ENCODE measurements at regions of chr2 and their contacts with region 1.

Region 1: GRCh38 chr2:65129826-65130663 is at the start of gene RAB1A:
- DNase-seq: peak; percentile 99
- H3K4me3 ChIP-seq: peak within 1 kb of the TSS; percentile 86 to 92 (median 91)
- H3K27ac ChIP-seq: peak within 1 kb of the TSS; percentile 99
- H3K4me1 ChIP-seq: no peaks in the 10 kb centered on the region
- H3K27me3 ChIP-seq: no peaks in the 10 kb centered on the region
- CTCF ChIP-seq: peak in 2 of 3 donors; percentile 10 to 11
- POLR2A ChIP-seq: peak; percentile 91
- total RNA-seq, gene RAB1A: 86.1 to 107 (median 89.5) TPM

Region 2: GRCh38 chr2:65056215-65057053 is 73.6 kb before region 1 on chr2 and contains the start of gene CEP68:
- intact Hi-C with region 1: loop called (anchors 2 kb)
- DNase-seq: peak; percentile 97
- H3K4me3 ChIP-seq: peak within 1 kb of the TSS; percentile 69 to 94 (median 87)
- H3K27ac ChIP-seq: peak within 1 kb of the TSS; percentile 89 to 90
- H3K4me1 ChIP-seq: peaks cover 0 to 9% of the 10 kb centered on the region in 2 donors
- H3K27me3 ChIP-seq: no peaks in the 10 kb centered on the region
- CTCF ChIP-seq: peak in 1 of 3 donors; percentile 8
- POLR2A ChIP-seq: peak; percentile 82
- total RNA-seq, gene CEP68: 23.3 to 32.2 (median 25.0) TPM